ENCODE measurements at regions of chr2 and their contacts with region 1.

Region 1: GRCh38 chr2:72757177-72757775 is 68.6 kb downstream of the EXOC6B start:
- DNase-seq: no peak
- H3K4me3 ChIP-seq: no peak overlapping the region
- H3K27ac ChIP-seq: no peak overlapping the region
- H3K4me1 ChIP-seq: no peaks in the 10 kb centered on the region
- H3K27me3 ChIP-seq: no peaks in the 10 kb centered on the region
- CTCF ChIP-seq: no peak
- POLR2A ChIP-seq: no peak

Region 2: DNA sequence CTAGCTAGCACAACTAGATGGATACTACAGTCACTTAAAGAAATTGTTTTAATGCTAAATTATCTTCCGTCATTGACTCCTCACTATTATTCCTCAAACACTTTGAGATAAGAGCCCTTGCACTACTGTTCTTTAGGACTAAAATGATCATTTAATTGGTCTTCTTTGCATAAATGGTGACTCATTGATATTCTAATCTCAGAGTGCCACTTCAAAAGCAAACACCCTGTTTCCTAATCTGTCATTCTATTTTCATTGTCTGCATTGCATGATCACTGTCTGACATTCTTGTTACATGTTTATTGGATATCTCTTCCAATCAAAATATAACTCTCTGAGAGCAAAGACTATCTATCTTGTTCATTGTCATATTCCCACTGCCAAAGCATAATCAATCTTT is 245.4 kb before region 1 on chr2:
- intact Hi-C with region 1: loop called (anchors 5 kb)
- DNase-seq: no peak
- H3K4me3 ChIP-seq: no peak overlapping the region
- H3K27ac ChIP-seq: no peak overlapping the region
- H3K4me1 ChIP-seq: no peaks in the 10 kb centered on the region
- H3K27me3 ChIP-seq: no peaks in the 10 kb centered on the region
- CTCF ChIP-seq: no peak
- POLR2A ChIP-seq: no peak

Region 3: GRCh38 chr2:72708236-72708635 is 49.0 kb before region 1 on chr2:
- intact Hi-C with region 1: loop called (anchors 5 kb)
- DNase-seq: no peak
- H3K4me3 ChIP-seq: no peak overlapping the region
- H3K27ac ChIP-seq: no peak overlapping the region
- H3K4me1 ChIP-seq: no peaks in the 10 kb centered on the region
- H3K27me3 ChIP-seq: no peaks in the 10 kb centered on the region
- CTCF ChIP-seq: no peak
- POLR2A ChIP-seq: no peak

Region 4: GRCh38 chr2:72871880-72872279 is 114.6 kb after region 1 on chr2:
- intact Hi-C with region 1: no loop called
- DNase-seq: no peak
- H3K4me3 ChIP-seq: no peak overlapping the region
- H3K27ac ChIP-seq: no peak overlapping the region
- H3K4me1 ChIP-seq: no peaks in the 10 kb centered on the region
- H3K27me3 ChIP-seq: no peaks in the 10 kb centered on the region
- CTCF ChIP-seq: no peak
- POLR2A ChIP-seq: no peak

Region 5: GRCh38 chr2:73451263-73451972 is 694.1 kb after region 1 on chr2:
- intact Hi-C with region 1: no loop called
- DNase-seq: no peak
- H3K4me3 ChIP-seq: no peak overlapping the region
- H3K27ac ChIP-seq: no peak overlapping the region
- H3K4me1 ChIP-seq: no peaks in the 10 kb centered on the region
- H3K27me3 ChIP-seq: no peaks in the 10 kb centered on the region
- CTCF ChIP-seq: no peak
- POLR2A ChIP-seq: no peak